ENCODE measurements at regions of chr1 and their contacts with region 1.

Region 1: DNA sequence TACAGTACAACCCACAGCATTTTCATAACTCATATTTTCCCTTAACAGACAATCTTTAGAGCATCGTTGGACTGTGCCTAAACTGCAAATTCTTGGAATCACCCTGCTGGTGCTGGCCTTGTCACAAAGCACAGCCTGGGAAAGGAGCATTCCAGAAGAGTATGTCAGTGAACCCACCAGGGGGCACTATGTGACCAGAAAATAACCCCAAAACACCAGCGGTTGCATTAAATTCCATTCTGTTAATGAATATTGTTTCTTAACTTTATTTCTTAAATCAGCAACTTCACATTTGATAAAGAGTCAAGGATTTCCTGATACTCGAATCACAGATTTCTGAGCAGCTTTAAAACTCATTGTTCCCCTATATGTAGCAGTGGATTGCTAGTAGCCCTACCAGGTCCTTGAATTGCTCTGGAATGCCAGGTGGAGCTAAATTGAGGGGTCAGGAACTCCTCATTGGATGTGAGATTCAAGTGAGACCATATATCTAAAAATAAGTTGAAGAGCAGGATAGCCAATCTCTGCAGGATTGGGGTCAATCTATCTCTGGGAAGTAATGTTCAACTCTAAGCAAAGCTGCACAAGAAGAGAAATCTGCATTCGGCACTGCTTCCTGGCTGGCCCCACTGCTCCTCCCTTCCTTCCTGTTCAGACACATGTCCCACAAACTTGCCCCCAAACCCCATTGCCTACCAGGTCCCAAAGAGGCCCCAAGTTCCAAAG is 12.7 kb upstream of the RAB4A start:
- H3K4me3 ChIP-seq: no peak overlapping the region
- H3K27ac ChIP-seq: no peak overlapping the region
- H3K4me1 ChIP-seq: peaks cover 9% of the 10 kb centered on the region
- CTCF ChIP-seq: peak; percentile 80; the same call in 1 of the 2 replicates

Region 2: DNA sequence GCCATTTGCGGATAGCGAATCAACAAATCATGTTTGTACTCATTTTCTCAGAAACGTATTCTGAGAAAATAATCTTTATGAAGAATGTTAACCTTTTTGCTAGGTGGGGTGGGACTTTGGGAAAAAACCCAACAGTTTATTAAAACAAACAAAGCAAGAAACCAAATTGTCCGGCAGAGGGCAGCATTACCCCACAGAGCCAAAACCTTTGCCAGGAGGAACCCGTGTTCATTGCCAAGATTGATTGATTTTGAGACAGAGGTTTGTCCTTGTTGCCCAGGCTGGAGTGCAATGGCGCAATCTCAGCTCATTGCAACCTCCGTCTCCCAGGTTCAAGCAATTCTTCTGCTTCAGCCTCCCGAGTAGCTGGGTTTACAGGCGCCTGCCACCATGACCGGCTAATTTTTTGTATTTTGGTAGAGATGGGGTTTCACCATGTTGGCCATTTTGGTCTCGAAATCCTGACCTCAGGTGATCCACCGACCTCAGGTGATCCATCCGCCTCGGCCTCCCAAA is 593.7 kb before region 1 on chr1:
- CTCF ChIA-PET with region 1: interaction called, 74 read pairs
- POLR2A ChIA-PET with region 1: interaction called, 3 read pairs
- H3K4me3 ChIP-seq: no peak overlapping the region
- H3K27ac ChIP-seq: no peak overlapping the region
- H3K4me1 ChIP-seq: no peaks in the 10 kb centered on the region
- CTCF ChIP-seq: peak; percentile 90

Region 3: GRCh38 chr1:228734881-228735801 is 523.1 kb before region 1 on chr1 and contains the start of gene RHOU:
- CTCF ChIA-PET with region 1: interaction called, 19 read pairs
- POLR2A ChIA-PET with region 1: interaction called, 4 read pairs
- H3K4me3 ChIP-seq: peak within 1 kb of the TSS; percentile 84
- H3K27ac ChIP-seq: peak within 1 kb of the TSS; percentile 97
- H3K4me1 ChIP-seq: peaks cover 12% of the 10 kb centered on the region
- CTCF ChIP-seq: peak; percentile 76

Region 4: DNA sequence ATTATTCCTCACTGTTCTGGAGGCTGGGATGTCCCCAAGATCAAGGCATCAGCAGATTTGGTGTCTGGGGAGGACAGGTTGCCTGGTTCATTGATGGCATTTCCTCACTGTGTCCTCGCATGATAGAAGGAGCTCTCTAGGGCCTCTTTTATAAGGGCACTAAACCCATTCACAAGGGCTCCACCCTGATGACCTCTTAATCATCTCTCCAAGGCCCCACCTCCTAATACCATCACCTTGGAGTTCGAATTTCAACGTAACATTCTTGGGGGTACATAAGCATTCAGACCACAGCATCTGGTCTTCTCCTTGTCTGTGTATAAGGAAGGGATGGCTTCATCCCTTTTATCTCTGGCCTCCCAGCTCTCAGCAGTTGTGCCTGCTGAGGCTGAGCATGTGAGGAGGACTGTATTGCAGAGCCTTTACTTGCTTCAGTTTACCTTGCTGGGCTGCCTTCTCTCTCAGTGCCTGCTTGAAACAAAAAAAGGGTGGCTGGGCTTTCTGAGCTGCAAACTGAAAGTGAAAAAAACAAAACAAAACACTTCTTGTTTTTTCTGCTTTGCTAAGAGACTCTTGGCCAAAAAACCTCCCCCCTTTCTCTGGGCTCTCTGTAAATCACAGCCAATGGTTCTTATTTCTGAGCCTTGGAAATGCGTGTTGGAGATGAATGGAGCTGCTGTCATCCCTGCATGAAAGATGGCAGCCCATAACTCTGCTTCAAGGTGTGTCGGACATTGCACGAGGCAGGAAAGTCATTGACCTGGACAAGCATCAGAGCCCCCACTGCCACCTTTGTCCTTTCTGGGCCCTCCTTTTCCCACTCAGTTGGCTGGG is 447.1 kb before region 1 on chr1:
- CTCF ChIA-PET with region 1: no interaction called
- POLR2A ChIA-PET with region 1: no interaction called
- H3K4me3 ChIP-seq: no peak overlapping the region
- H3K27ac ChIP-seq: no peak overlapping the region
- H3K4me1 ChIP-seq: peaks cover 4% of the 10 kb centered on the region
- CTCF ChIP-seq: no peak

Region 5: DNA sequence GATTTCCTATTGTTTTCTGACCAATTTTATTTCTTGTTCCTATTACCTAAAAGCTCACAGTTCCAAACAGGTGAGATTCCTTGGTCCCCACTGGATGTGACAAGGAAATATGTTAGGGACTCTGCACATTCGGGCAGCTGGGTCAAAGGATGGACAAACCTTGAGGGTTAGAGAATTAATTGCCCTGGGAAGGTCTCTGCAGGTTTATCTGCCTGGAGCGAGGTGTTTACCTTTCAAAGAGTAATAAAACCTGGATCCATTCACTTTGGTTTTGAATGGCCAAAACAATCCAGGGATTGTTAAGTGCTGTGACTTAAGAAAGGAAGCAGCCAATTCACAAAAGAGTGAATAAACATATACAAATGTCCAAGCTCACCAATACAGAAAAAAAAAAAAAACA is 20.9 kb before region 1 on chr1:
- CTCF ChIA-PET with region 1: interaction called, 115 read pairs
- POLR2A ChIA-PET with region 1: no interaction called
- H3K4me3 ChIP-seq: no peak overlapping the region
- H3K27ac ChIP-seq: no peak overlapping the region
- H3K4me1 ChIP-seq: no peaks in the 10 kb centered on the region; the same call in 1 of the 2 replicates
- CTCF ChIP-seq: no peak

Region 6: GRCh38 chr1:229452956-229453801 is 195.0 kb after region 1 on chr1:
- CTCF ChIA-PET with region 1: interaction called, 20 read pairs
- POLR2A ChIA-PET with region 1: no interaction called
- H3K4me3 ChIP-seq: no peak overlapping the region
- H3K27ac ChIP-seq: no peak overlapping the region
- H3K4me1 ChIP-seq: no peaks in the 10 kb centered on the region
- CTCF ChIP-seq: peak; percentile 75

Region 7: DNA sequence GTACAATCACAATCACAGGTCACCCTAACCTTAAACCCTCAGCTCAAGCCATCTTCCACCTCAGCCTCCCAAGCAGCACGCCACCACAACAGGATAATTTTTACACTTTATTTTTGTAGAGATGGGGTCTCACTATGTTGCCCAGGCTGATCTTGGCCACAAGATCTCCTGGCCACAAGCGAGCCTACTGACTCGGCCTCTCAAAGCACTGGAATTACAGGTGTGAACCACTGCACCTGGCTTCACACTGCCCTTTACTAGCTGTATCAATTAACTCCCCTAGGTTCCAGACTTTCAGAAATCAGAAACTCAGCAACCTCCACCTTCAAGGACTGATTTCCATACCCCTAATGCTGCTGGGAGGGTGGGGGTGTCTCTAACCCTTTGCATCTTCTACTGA is 213.0 kb after region 1 on chr1:
- CTCF ChIA-PET with region 1: interaction called, 16 read pairs
- POLR2A ChIA-PET with region 1: interaction called, 3 read pairs
- H3K4me3 ChIP-seq: no peak overlapping the region
- H3K27ac ChIP-seq: no peak overlapping the region
- H3K4me1 ChIP-seq: no peaks in the 10 kb centered on the region
- CTCF ChIP-seq: no peak

Region 8: DNA sequence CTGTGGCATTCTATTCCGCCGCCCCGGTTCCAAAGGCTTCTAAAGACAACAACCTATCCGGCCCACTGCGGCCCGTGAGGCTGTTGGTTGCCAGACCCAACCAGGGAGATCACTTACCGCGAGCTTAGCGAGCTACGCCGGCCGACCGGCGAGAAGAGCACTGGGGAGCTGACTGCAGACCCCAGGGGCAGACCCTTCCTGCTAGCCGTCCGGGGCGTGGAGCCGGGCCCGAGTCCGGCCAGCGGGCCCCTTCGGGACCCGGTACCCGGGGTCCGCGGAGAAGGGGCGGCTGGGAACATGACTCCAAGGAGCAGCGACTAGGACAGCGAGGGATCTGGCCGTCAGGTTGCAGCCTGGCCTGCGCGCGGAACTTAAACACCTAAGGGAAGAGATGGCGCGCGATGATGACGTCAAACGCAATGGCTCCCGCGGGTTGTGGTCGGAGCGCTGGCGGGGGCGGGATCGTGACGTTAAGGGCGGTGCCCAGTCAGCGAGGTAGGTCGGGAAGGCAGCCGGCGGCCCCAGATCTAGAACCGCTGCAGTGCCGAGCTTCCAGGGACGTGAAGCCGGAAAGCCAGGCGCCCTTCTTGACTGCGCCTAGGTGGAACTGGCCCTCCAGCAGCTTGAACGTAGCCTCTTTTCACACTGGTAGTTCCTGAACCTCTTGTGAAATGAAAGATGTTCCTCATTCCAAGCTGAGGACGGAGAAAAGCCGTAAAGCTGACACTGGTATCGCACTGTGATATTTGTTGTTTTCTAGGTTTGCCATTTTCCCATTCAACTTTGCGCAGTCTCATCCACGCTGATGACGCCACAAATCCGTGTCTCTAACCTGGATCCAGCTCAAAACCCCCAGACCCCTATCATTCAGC is 250.0 kb after region 1 on chr1 and contains the start of gene NUP133:
- CTCF ChIA-PET with region 1: interaction called, 11 read pairs
- POLR2A ChIA-PET with region 1: interaction called, 3 read pairs
- H3K4me3 ChIP-seq: peak within 1 kb of the TSS; percentile 96
- H3K27ac ChIP-seq: peak within 1 kb of the TSS; percentile 85
- H3K4me1 ChIP-seq: peaks cover 7% of the 10 kb centered on the region; the same call in 1 of the 2 replicates
- CTCF ChIP-seq: no peak